H1 (cell line): ENCODE measurements at regions of chr5 and their contacts with region 1.

Region 1: GRCh38 chr5:81856948-81857928 is 106.3 kb upstream of the SSBP2 start:
- DNase-seq: peak in 1 of 2 experiments; percentile 55
- H3K4me3 ChIP-seq: no peak overlapping the region
- H3K27ac ChIP-seq: no peak overlapping the region
- H3K4me1 ChIP-seq: peaks cover 6 to 18% (median 10%) of the 10 kb centered on the region in 4 experiments; a peak in 6 of 7 replicates
- H3K27me3 ChIP-seq: no peaks in the 10 kb centered on the region
- CTCF ChIP-seq: peak; percentile 23 to 62 (median 61)
- EP300 ChIP-seq: no peak
- POLR2A ChIP-seq: no peak
- RAD21 ChIP-seq: peak; percentile 37 to 57

Region 2: DNA sequence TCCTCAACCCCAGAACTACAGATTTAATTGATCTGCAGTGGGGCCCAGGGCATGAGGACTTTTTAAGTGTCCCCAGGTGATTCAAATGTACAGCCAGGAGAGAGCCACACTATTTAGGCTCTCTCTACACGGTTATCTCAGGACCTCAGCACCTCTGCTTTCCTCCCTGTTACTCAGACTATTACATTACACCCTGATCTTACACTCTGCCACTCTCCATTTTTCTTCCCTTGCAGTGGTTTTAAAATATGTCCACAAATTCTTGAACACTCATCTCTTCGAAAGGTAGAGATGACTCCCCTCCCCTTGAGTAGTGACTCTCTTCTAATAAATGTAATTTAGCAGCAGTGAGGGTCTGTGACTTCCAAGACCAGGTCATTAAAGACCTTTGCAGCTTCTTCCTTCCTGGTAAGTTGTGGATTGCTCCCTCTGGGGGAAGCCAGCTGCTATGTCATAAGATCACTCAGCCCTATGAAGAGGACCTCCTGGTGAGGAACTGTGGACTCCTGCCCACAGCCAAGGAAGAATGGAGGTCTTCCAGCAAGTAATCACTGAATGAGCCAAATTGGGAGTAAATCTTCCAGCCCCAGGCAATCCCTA is 18.8 kb before region 1 on chr5:
- CTCF ChIA-PET with region 1: interaction called, 42 read pairs
- POLR2A ChIA-PET with region 1: interaction called, 25 read pairs
- DNase-seq: no peak
- H3K4me3 ChIP-seq: no peak overlapping the region
- H3K27ac ChIP-seq: no peak overlapping the region
- H3K4me1 ChIP-seq: peaks cover 0 to 9% (median 4%) of the 10 kb centered on the region in 4 experiments; a peak in 3 of 7 replicates
- H3K27me3 ChIP-seq: no peaks in the 10 kb centered on the region
- CTCF ChIP-seq: peak; percentile 36 to 64 (median 43)
- EP300 ChIP-seq: no peak
- POLR2A ChIP-seq: no peak
- RAD21 ChIP-seq: peak; percentile 58 to 73

Region 3: GRCh38 chr5:81884871-81885270 is 27.6 kb after region 1 on chr5:
- CTCF ChIA-PET with region 1: interaction called, 13 read pairs
- POLR2A ChIA-PET with region 1: no interaction called
- DNase-seq: no peak
- H3K4me3 ChIP-seq: no peak overlapping the region
- H3K27ac ChIP-seq: no peak overlapping the region
- H3K4me1 ChIP-seq: no peaks in the 10 kb centered on the region
- H3K27me3 ChIP-seq: no peaks in the 10 kb centered on the region
- CTCF ChIP-seq: no peak
- EP300 ChIP-seq: no peak
- POLR2A ChIP-seq: no peak
- RAD21 ChIP-seq: peak; percentile 3 to 31; a peak in 2 of 4 replicates